ENCODE measurements at regions of chr5 and their contacts with region 1.

Region 1: GRCh38 chr5:103139264-103139865 is 19.3 kb downstream of the PPIP5K2 start:
- DNase-seq: peak; percentile 81
- CTCF ChIP-seq: peak; percentile 87

Region 2: DNA sequence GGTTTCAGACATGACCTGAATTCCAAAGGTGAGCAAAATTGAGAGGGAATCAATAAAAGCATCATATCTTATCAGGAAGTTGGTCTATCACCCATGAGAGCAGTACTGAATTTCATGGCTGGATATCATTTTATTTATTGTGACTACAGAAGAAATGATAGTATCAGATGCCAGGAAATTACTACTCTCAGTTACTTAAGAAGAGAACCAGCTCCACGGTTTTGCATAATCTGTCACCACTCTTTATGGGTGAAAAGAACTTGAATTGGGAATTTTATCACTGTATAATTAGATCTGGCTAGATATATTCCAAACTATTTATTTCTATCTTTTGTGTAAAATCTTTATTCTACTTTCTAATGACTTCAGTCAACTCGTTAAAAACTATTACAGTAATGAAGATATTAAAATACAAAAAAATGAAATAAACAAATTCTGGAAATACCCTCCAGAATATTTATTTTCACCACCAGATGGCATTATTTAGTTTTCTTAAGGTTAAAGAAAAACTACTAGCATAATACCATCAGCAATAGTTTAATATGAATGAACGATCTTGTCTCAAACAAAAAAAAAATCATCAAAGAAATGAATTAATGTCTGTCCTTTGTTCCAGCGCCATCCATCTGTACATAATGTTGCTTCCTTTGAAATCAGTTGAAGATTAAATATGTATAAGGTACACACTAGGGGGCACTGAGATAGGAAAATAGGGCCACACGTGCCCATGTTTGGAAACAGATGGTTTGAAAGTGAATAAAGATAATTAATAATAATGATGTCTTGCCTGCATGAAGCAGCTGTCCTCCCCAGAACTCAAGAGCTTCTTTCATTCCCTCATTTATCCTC is 555.9 kb before region 1 on chr5:
- in situ Hi-C with region 1: loop called (anchors 25 kb)
- DNase-seq: no peak
- CTCF ChIP-seq: peak; percentile 25

Measured in GM13977 (cell line).